BJ (cell line): ENCODE measurements at regions of chrX and their contacts with region 1.

Region 1: DNA sequence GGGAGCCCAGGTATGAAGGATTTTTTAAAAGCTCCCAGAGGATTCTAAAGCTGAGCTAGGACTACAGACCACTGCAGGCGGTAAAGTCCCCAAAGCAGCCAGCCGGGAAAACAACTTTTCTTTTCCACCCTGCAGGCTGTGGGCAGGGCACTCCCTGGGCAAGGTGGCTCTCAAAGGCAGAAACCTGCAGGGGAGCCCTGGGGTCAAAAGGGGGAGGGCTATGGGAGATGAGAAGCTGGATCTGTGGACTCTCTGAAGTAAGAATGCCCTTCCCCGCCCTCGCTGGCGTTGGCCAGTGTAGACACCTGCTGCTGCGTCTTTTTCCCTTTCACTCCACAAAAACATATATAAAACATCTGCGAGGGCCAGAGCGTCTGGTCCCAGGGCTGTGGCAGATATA is 294.1 kb downstream of the BCOR start:
- DNase-seq: no peak
- H3K4me3 ChIP-seq: no peak overlapping the region
- H3K27me3 ChIP-seq: no peaks in the 10 kb centered on the region
- CTCF ChIP-seq: no peak

Region 2: GRCh38 chrX:39820938-39821708 is 17.4 kb after region 1 on chrX:
- CTCF ChIA-PET with region 1: no interaction called
- POLR2A ChIA-PET with region 1: no interaction called
- DNase-seq: no peak
- H3K4me3 ChIP-seq: peak overlapping the region; percentile 38
- H3K27me3 ChIP-seq: no peaks in the 10 kb centered on the region
- CTCF ChIP-seq: no peak

Region 3: DNA sequence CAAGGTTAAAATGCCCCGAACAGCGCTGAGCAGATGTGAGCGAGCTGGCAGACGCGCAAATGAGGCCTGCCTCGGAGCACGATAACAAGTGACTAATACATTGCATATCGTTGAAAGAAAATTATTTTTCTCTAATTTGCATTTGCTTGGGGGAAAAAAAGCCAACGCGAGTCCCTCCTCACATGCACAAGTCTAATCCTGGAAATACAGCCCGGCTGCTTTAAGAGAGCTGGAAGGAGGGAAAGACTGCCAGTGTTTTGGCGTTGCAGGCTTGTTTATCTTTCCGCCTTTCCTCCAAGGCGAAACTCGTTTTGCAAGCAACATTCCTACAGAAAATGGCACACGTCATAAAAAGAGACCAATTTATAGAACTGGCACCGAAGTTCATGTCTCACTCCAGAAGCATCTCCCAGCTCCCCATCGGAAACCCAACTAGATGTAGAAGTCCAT is 281.4 kb after region 1 on chrX:
- CTCF ChIA-PET with region 1: no interaction called
- POLR2A ChIA-PET with region 1: interaction called, 23 read pairs
- DNase-seq: no peak
- H3K4me3 ChIP-seq: no peak overlapping the region
- H3K27me3 ChIP-seq: no peaks in the 10 kb centered on the region
- CTCF ChIP-seq: no peak